BJ (cell line): ENCODE measurements at regions of chr2 and their contacts with region 1.

Region 1: GRCh38 chr2:30231212-30231995 is at the start of gene LBH:
- DNase-seq: peak; percentile 40
- H3K4me3 ChIP-seq: peak within 1 kb of the TSS; percentile 69
- H3K27me3 ChIP-seq: no peaks in the 10 kb centered on the region
- CTCF ChIP-seq: no peak
- polyA plus RNA-seq, gene LBH: 115 and 145 TPM in 2 replicates

Region 2: DNA sequence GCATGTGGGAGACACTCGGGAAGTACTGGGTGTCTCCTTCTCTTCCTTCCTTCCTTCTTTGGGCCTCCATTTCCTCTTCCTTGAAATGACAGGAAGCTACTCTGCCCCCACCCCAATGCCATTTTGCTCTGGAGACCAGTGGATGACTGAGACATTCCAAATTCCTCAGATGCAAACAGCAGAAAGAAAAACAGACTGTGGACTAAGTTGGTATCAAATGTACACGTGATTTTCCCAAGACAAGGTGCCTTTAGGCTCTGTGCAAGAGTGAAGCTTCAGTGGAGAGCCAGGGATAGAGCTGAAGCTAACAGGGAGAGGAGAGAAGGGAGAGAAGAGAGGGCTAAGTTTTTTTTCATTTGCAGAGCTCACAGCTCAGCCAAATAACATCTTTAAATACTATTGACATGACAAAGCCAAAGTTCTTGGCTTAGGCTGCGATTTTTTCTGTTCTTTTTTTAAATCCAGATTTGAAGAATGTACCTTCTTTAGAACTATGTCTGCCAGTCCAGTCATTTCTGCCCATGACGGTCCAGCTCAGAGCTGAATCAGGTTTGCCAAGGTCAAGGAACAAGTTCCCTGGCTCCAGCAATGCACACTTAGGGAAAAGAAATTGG is 131.2 kb after region 1 on chr2:
- CTCF ChIA-PET with region 1: no interaction called
- POLR2A ChIA-PET with region 1: interaction called, 20 read pairs
- DNase-seq: no peak
- H3K4me3 ChIP-seq: no peak overlapping the region
- H3K27me3 ChIP-seq: no peaks in the 10 kb centered on the region
- CTCF ChIP-seq: no peak

Region 3: DNA sequence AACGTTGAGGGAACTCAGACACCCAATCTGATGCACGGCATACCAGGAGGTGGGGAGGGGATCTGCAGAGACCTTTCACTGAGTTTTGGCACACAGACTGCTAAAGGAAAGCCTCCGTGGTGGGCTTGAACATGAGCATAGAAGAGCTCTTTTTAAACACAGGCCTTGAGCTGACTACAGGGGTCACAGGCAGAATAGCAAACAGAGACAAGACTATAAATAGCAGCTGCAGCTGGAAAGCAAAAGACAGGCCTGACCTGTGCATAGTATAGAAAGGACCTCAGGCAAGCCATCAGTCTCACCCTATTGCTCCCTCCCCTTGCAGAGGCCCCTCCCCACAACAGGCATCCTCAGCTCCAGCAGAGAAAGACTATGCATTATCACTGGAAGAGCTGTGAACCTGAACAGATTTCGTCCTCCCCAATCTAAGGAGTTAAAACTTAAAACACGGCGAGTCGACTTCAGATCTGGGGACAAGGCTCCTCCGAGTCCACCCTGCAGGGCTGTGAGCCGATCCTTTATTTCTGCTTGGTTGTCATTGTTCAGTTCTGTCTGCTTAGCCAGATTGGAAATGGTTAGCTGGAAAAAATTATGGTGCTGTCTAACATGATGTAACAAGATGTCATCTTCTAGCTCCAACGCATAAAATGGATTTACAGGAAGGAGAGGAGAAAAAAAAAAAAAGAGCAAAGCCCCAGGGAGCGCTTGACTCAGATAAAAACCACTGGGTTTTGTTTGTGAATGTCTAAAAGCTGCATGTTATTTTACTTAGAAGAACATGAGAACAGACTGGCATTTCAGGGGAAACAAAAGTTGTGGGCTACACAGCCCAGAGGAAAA is 190.4 kb after region 1 on chr2:
- CTCF ChIA-PET with region 1: interaction called, 4 read pairs
- POLR2A ChIA-PET with region 1: interaction called, 17 read pairs
- DNase-seq: peak; percentile 60
- H3K4me3 ChIP-seq: no peak overlapping the region
- H3K27me3 ChIP-seq: no peaks in the 10 kb centered on the region
- CTCF ChIP-seq: no peak